ENCODE measurements at regions of chr17 and their contacts with region 1.

Region 1: GRCh38 chr17:58631523-58632323 is 60.1 kb downstream of the TEX14 start:
- DNase-seq: peak; percentile 97
- H3K4me3 ChIP-seq: peak overlapping the region; percentile 30 to 49 (median 40)
- H3K27ac ChIP-seq: peak overlapping the region; percentile 73 to 88 (median 84)
- H3K4me1 ChIP-seq: peaks cover 0 to 11% (median 5%) of the 10 kb centered on the region in 4 donors
- H3K27me3 ChIP-seq: no peaks in the 10 kb centered on the region
- CTCF ChIP-seq: peak in 3 of 4 experiments; percentile 7 to 13 (median 11)
- EP300 ChIP-seq: peak in 2 of 4 donors; percentile 45 to 69
- POLR2A ChIP-seq: peak; percentile 92 to 96

Region 2: DNA sequence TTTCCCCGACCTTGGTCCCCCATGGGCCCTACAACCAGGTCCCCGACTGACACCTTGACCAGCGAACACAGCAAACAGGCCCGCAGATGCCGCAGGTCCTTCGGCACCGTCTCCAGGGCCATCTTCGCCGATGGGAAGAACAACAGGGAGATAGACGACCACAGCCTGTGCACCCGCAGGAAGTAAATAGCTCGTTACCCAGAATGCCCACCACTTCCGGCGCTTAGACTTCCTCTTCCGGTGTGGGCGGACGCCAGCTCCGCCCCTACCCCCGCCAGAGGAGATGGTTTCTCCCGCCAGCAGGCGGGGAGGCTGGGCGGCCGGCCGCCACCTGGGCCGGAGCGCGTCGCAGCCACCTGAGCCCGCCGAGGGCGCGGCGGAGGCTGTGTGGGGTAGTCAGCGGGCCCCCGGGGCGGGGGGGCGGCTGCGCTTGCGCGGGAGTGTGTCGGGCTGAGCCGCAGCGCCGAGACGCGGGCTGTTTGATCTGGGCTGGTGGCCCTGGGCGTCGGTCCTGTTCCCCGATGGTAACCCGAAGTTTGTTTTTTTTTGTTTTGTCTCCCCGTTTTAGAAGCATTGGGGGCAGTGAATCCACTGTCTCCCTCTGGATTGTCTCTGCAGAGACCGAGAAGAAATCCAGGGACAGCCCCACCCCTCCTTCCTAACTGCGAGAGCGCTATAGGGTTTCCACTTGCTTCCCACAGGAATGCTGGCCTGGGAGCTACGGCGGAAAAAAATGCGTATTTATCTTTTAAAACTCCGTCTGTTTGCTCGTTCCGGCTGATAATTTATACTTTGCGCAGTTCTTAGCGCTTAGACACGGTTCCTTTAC is 279.5 kb before region 1 on chr17 and contains the start of gene SUPT4H1:
- intact Hi-C with region 1: loop called (anchors 10 kb)
- DNase-seq: peak; percentile 93
- H3K4me3 ChIP-seq: peak within 1 kb of the TSS; percentile 58 to 94 (median 92)
- H3K27ac ChIP-seq: peak within 1 kb of the TSS; percentile 95 to 98 (median 96)
- H3K4me1 ChIP-seq: peaks cover 0 to 22% (median 14%) of the 10 kb centered on the region in 4 donors
- H3K27me3 ChIP-seq: no peaks in the 10 kb centered on the region
- CTCF ChIP-seq: no peak
- EP300 ChIP-seq: peak in 1 of 4 donors; percentile 36
- POLR2A ChIP-seq: peak; percentile 33 to 66
- total RNA-seq, gene SUPT4H1: 50.5 to 65.3 (median 57.4) TPM

Region 3: GRCh38 chr17:58587702-58588254 is 43.9 kb before region 1 on chr17:
- intact Hi-C with region 1: loop called (anchors 2 kb)
- DNase-seq: peak; percentile 67
- H3K4me3 ChIP-seq: no peak overlapping the region
- H3K27ac ChIP-seq: no peak overlapping the region
- H3K4me1 ChIP-seq: peaks cover 0 to 3% (median 0%) of the 10 kb centered on the region in 4 donors
- H3K27me3 ChIP-seq: no peaks in the 10 kb centered on the region
- CTCF ChIP-seq: peak; percentile 40 to 91 (median 79)
- EP300 ChIP-seq: no peak
- POLR2A ChIP-seq: no peak

Region 4: GRCh38 chr17:58658804-58659713 is 27.3 kb after region 1 on chr17:
- intact Hi-C with region 1: loop called (anchors 1 kb)
- DNase-seq: peak; percentile 91
- H3K4me3 ChIP-seq: peak overlapping the region; percentile 26 to 50 (median 44)
- H3K27ac ChIP-seq: peak overlapping the region; percentile 74 to 85 (median 77)
- H3K4me1 ChIP-seq: peaks cover 0 to 9% (median 5%) of the 10 kb centered on the region in 4 donors
- H3K27me3 ChIP-seq: no peaks in the 10 kb centered on the region
- CTCF ChIP-seq: no peak
- EP300 ChIP-seq: peak in 1 of 4 donors; percentile 25
- POLR2A ChIP-seq: peak; percentile 88 to 98

Region 5: GRCh38 chr17:58677194-58677880 is 45.6 kb after region 1 on chr17:
- intact Hi-C with region 1: no loop called
- DNase-seq: no peak
- H3K4me3 ChIP-seq: no peak overlapping the region
- H3K27ac ChIP-seq: no peak overlapping the region
- H3K4me1 ChIP-seq: no peaks in the 10 kb centered on the region
- H3K27me3 ChIP-seq: no peaks in the 10 kb centered on the region
- CTCF ChIP-seq: no peak
- EP300 ChIP-seq: no peak
- POLR2A ChIP-seq: no peak

Region 6: DNA sequence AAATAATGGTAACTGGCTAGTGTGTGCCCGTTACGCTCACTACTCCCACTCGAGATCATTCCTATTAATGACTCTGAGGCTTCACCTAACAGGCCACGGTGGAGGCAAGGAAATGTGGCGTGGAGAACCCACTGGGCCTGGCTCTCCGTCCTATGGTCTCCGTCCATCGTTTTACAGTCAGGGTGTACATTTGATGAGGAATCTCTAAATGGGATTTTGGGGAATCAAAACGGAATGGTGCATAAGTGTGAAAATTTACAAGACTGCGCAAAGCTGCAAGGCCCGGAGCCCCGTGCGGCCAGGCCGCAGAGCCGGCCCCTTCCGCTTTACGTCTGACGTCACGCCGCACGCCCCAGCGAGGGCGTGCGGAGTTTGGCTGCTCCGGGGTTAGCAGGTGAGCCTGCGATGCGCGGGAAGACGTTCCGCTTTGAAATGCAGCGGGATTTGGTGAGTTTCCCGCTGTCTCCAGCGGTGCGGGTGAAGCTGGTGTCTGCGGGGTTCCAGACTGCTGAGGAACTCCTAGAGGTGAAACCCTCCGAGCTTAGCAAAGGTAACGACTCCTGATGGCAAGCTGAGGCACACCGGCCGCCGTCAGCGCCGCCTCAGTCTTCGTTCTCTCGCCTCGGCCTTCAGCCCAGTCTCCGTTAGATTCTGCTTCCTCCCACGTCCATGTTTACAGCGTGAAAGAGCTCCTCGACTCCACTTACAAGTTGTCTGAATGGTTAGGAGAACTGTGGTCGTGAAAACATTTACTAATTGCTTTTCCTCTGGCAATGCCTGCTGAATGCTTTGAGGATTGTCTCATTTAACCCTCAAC is 60.7 kb after region 1 on chr17 and contains the start of gene RAD51C:
- intact Hi-C with region 1: loop called (anchors 1 kb)
- DNase-seq: peak; percentile 91
- H3K4me3 ChIP-seq: peak within 1 kb of the TSS; percentile 58 to 69 (median 66)
- H3K27ac ChIP-seq: peak within 1 kb of the TSS; percentile 82 to 91 (median 84)
- H3K4me1 ChIP-seq: peaks cover 0 to 15% (median 13%) of the 10 kb centered on the region in 4 donors
- H3K27me3 ChIP-seq: no peaks in the 10 kb centered on the region
- CTCF ChIP-seq: no peak
- EP300 ChIP-seq: peak in 1 of 4 donors; percentile 5
- POLR2A ChIP-seq: peak; percentile 62 to 74
- total RNA-seq, gene RAD51C: 16.8 to 25.2 (median 19.0) TPM